Heart right ventricle (tissue), 16 donors: ENCODE measurements at regions of chr9 and their contacts with region 1.

Region 1: GRCh38 chr9:13719981-13720676 is 440.6 kb upstream of the MPDZ start:
- DNase-seq: no peak
- ATAC-seq: peak in 1 of 8 donors; percentile 18
- H3K4me3 ChIP-seq: no peak overlapping the region
- H3K27ac ChIP-seq: no peak overlapping the region
- H3K4me1 ChIP-seq: peaks cover 0 to 39% (median 22%) of the 10 kb centered on the region in 9 donors
- H3K27me3 ChIP-seq: no peaks in the 10 kb centered on the region
- CTCF ChIP-seq: no peak

Region 2: GRCh38 chr9:13684656-13685055 is 35.5 kb before region 1 on chr9:
- intact Hi-C with region 1: no loop called
- DNase-seq: no peak
- ATAC-seq: peak in 1 of 8 donors; percentile 54
- H3K4me3 ChIP-seq: no peak overlapping the region
- H3K27ac ChIP-seq: peak overlapping the region in 3 of 10 donors; percentile 3 to 8 (median 4)
- H3K4me1 ChIP-seq: peaks cover 0 to 29% (median 13%) of the 10 kb centered on the region in 9 donors
- H3K27me3 ChIP-seq: no peaks in the 10 kb centered on the region
- CTCF ChIP-seq: no peak

Region 3: GRCh38 chr9:13734601-13735000 is 14.5 kb after region 1 on chr9:
- intact Hi-C with region 1: no loop called
- DNase-seq: no peak
- ATAC-seq: no peak
- H3K4me3 ChIP-seq: no peak overlapping the region
- H3K27ac ChIP-seq: no peak overlapping the region
- H3K4me1 ChIP-seq: peaks cover 0 to 4% (median 0%) of the 10 kb centered on the region in 9 donors
- H3K27me3 ChIP-seq: no peaks in the 10 kb centered on the region
- CTCF ChIP-seq: no peak

Region 4: DNA sequence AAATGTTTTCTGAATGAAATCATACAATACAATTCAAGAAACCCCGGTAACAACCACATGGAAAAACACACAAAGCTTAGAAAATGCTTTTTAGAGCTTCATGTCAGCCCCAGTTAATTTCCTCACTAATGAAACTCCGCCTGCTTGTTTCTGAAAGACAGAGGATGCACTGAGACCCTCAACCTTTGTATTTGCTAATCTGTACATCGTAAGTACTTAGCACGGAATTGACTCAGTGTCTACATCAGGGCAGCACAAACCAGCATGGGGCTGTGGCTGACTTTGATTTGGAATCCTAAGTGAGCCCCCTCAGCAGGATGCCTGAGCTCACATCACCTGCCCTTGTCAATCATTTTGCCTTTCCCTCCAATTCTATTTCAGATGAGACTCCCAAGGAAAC is 58.5 kb after region 1 on chr9:
- intact Hi-C with region 1: loop called in 1 of 10 experiments (anchors 10 kb)
- DNase-seq: no peak
- ATAC-seq: no peak
- H3K4me3 ChIP-seq: no peak overlapping the region
- H3K27ac ChIP-seq: no peak overlapping the region
- H3K4me1 ChIP-seq: peaks cover 0 to 16% (median 5%) of the 10 kb centered on the region in 9 donors
- H3K27me3 ChIP-seq: no peaks in the 10 kb centered on the region
- CTCF ChIP-seq: no peak

Region 5: DNA sequence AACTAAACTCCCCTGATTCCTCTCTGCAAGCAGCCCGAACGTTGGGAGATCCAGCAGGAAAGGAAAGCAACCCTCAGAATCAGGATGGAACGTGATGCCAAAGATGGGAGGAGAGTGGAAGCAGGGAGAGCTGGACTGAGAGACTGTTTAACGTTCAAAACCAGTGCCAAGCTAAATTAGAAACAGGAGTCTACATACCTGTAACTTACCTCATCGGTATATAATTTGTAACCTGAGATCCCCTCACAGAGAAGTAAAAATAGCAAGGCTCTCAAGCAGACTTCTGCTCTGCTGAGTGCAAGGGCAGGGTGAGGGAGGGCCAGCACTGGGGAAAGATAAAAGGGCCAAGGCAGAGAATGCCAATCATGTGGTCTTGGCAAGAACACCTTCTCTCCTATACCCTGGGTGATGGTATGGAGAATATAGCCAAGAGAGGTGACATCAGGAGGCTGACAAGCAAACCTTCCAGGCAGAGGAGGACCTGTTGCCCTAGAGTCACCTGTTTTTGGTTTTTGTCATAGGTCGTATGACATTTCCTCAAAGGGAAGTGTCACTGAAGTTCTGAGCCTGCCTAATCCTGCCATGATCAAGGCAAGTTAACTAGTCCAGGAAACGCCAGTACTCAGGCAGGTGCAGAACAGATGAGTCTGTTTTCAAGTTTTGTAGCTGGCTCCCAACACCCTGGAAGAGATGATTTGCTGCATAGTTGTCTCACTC is 121.8 kb after region 1 on chr9:
- intact Hi-C with region 1: loop called in 1 of 10 experiments (anchors 10 kb)
- DNase-seq: peak; percentile 17 to 45
- ATAC-seq: peak; percentile 58 to 97 (median 96)
- H3K4me3 ChIP-seq: no peak overlapping the region
- H3K27ac ChIP-seq: peak overlapping the region in 9 of 10 donors; percentile 1 to 81 (median 64)
- H3K4me1 ChIP-seq: peaks cover 0 to 11% (median 0%) of the 10 kb centered on the region in 9 donors
- H3K27me3 ChIP-seq: no peaks in the 10 kb centered on the region
- CTCF ChIP-seq: no peak

Region 6: DNA sequence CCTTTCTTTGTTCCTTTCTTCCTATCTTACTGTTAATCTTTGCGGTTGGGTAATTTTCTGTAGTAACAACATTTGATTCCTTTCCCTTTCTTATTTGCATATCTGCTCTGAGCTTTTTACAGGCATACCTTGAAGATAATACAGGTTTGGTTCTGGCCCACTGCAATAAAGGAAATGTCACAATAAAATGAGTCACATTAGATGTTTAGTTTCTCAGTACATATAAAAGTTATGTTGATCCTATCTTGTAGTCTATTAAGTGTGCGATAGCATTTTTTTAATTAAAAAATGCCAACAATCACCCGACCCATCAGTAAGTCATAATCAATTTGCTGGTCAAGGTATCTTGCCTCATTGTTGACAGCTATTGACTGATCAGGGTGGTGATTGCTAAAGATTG is 153.2 kb after region 1 on chr9:
- intact Hi-C with region 1: no loop called
- DNase-seq: no peak
- ATAC-seq: no peak
- H3K4me3 ChIP-seq: no peak overlapping the region
- H3K27ac ChIP-seq: no peak overlapping the region
- H3K4me1 ChIP-seq: no peaks in the 10 kb centered on the region
- H3K27me3 ChIP-seq: no peaks in the 10 kb centered on the region
- CTCF ChIP-seq: no peak